Activated CD4-positive, alpha-beta T cell treated with anti-CD3 and anti-CD28 coated beads, Interleukin-2, amount 10 ng/mL, durations not matched to agents 24 days and 14 days (primary cell): ENCODE measurements at regions of chr15 and their contacts with region 1.

Region 1: DNA sequence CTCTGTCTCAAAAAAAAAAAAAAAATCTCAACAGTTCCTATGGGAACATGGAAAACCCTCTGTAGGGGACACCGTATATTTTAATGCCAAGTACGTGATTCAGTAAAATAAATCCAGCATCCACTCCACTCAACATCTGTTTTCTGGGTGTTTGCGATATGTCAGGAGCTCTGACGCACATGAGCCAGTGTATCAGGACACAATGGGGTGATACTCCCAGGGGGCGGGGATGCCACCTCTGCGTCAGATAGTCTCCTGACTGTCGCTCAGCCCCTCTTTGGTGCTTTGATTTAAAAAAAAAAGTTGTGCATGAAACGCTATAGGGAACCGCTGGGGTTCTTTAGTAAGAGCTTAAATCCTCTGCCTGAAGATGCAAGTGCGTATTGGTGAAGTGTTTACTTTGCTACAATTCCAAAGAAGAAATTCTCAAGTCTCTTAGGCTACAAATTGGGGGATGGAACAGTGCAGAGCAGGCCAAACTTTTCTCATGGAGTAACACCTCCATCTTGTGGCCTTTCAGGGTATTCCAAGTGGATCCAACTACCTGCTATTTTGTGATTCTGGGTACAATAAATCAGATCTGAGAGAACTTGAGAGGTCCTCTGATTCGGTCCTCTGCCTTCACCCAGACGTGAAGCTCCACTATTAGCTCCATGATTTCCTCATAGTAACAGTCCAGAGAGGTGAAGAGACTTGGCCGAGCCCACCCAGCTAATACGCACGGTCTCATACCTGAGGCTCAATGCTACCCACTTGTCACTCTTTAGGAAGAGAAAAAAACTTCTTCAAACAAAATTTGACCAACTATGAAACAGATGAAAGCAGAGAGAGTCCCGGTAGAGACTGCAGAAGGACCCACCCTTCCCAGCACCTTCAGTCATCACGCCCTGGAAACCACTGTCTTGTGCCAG is 9.3 kb upstream of the NR2E3 start:
- DNase-seq: peak; percentile 75
- H3K4me3 Mint-ChIP-seq: no peak overlapping the region
- H3K27ac Mint-ChIP-seq: no peak overlapping the region
- H3K4me1 Mint-ChIP-seq: no peaks in the 10 kb centered on the region
- H3K27me3 Mint-ChIP-seq: no peaks in the 10 kb centered on the region

Region 2: GRCh38 chr15:71611551-71612396 is 189.3 kb before region 1 on chr15:
- intact Hi-C with region 1: no loop called
- DNase-seq: no peak
- H3K4me3 Mint-ChIP-seq: no peak overlapping the region
- H3K27ac Mint-ChIP-seq: no peak overlapping the region
- H3K4me1 Mint-ChIP-seq: no peaks in the 10 kb centered on the region
- H3K27me3 Mint-ChIP-seq: peaks cover 25% of the 10 kb centered on the region

Region 3: DNA sequence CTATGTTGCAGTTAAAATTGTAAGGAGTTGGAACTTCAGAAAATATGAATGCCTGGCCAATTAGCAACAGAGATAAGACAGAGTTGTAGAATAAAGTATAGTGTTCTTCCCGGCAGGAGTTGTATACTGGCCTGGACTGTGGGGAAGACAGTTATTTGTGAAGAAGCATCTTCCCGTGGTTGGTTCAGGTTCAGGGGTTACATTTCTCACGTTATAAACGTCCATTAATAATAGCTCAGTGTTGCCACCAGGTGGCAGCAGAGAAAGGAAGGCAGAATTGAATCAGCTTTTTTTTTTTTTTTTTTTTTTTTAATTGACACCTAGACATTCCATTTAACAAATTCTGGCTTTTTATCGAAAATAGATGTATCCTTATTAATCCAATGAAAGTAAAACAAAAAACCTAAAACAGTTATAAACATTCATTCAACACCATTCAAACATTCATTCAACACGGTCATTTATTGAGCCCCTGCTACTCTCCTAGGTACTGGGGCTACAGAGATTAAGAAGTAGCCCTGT is 57.2 kb before region 1 on chr15:
- intact Hi-C with region 1: loop called (anchors 1 kb)
- DNase-seq: peak; percentile 85
- H3K4me3 Mint-ChIP-seq: no peak overlapping the region
- H3K27ac Mint-ChIP-seq: no peak overlapping the region
- H3K4me1 Mint-ChIP-seq: no peaks in the 10 kb centered on the region
- H3K27me3 Mint-ChIP-seq: peaks cover 4% of the 10 kb centered on the region

Region 4: GRCh38 chr15:71780115-71780976 is 20.7 kb before region 1 on chr15:
- intact Hi-C with region 1: loop called (anchors 2 kb)
- DNase-seq: peak; percentile 78
- H3K4me3 Mint-ChIP-seq: no peak overlapping the region
- H3K27ac Mint-ChIP-seq: peak overlapping the region; percentile 13
- H3K4me1 Mint-ChIP-seq: peaks cover 15% of the 10 kb centered on the region
- H3K27me3 Mint-ChIP-seq: peaks cover 2% of the 10 kb centered on the region